ENCODE measurements at regions of chr19 and their contacts with region 1.

Region 1: DNA sequence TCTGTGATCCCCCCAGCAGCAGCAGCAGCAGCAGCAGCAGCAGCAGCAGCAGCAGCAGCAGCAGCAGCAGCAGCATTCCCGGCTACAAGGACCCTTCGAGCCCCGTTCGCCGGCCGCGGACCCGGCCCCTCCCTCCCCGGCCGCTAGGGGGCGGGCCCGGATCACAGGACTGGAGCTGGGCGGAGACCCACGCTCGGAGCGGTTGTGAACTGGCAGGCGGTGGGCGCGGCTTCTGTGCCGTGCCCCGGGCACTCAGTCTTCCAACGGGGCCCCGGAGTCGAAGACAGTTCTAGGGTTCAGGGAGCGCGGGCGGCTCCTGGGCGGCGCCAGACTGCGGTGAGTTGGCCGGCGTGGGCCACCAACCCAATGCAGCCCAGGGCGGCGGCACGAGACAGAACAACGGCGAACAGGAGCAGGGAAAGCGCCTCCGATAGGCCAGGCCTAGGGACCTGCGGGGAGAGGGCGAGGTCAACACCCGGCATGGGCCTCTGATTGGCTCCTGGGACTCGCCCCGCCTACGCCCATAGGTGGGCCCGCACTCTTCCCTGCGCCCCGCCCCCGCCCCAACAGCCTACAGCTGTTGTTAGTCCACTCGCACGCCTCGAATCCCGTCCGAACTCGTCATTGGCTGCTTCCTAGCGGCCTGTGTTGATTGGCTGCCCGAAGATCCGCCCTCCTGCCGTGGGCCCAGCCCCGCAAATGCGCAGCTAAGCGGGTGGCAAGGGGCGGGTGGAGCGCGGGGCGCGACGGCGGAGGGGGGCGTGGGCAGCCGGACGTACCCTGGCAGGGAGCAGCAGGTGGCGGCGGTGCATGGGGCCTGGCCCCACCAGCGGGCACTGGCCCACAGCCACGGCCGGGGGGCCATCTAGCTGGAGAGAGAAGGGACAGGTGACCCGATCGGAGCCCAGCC is 1.4 kb upstream of the SIX5 start:
- H3K4me3 ChIP-seq: peak overlapping the region; percentile 36
- H3K27ac ChIP-seq: peak overlapping the region; percentile 70
- H3K4me1 ChIP-seq: peaks cover 15% of the 10 kb centered on the region
- CTCF ChIP-seq: peak; percentile 97

Region 2: DNA sequence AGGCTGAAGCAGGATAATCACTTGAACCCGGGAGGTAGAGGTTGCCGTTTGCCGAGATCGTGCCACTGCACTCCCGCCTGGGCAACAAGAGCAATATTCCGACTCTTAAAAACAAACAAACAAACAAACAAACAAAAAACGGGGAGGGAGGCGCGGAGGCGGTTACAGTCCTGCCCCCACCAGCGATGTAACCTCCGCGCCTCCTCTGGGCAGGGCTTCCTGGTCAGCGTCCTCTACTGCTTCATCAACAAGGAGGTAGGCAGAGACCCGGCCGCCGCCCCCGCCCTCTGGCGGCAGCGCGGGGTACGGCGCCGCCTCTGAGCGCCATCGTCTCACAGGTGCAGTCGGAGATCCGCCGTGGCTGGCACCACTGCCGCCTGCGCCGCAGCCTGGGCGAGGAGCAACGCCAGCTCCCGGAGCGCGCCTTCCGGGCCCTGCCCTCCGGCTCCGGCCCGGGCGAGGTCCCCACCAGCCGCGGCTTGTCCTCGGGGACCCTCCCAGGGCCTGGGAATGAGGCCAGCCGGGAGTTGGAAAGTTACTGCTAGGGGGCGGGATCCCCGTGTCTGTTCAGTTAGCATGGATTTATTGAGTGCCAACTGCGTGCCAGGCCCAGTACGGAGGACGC is 88.9 kb before region 1 on chr19:
- CTCF ChIA-PET with region 1: interaction called, 9 read pairs
- POLR2A ChIA-PET with region 1: interaction called, 111 read pairs
- H3K4me3 ChIP-seq: peak overlapping the region; percentile 25
- H3K27ac ChIP-seq: no peak overlapping the region; the same call in 1 of the 2 replicates
- H3K4me1 ChIP-seq: peaks cover 11% of the 10 kb centered on the region
- CTCF ChIP-seq: peak; percentile 97

Region 3: GRCh38 chr19:45705115-45705514 is 65.3 kb before region 1 on chr19:
- CTCF ChIA-PET with region 1: no interaction called
- POLR2A ChIA-PET with region 1: interaction called, 26 read pairs
- H3K4me3 ChIP-seq: no peak overlapping the region
- H3K27ac ChIP-seq: no peak overlapping the region
- H3K4me1 ChIP-seq: no peaks in the 10 kb centered on the region
- CTCF ChIP-seq: no peak

Region 4: GRCh38 chr19:45717166-45717982 is 53.1 kb before region 1 on chr19:
- CTCF ChIA-PET with region 1: interaction called, 27 read pairs
- POLR2A ChIA-PET with region 1: interaction called, 133 read pairs
- H3K4me3 ChIP-seq: peak overlapping the region; percentile 72
- H3K27ac ChIP-seq: peak overlapping the region; percentile 92
- H3K4me1 ChIP-seq: peaks cover 19% of the 10 kb centered on the region
- CTCF ChIP-seq: peak; percentile 81

Region 5: DNA sequence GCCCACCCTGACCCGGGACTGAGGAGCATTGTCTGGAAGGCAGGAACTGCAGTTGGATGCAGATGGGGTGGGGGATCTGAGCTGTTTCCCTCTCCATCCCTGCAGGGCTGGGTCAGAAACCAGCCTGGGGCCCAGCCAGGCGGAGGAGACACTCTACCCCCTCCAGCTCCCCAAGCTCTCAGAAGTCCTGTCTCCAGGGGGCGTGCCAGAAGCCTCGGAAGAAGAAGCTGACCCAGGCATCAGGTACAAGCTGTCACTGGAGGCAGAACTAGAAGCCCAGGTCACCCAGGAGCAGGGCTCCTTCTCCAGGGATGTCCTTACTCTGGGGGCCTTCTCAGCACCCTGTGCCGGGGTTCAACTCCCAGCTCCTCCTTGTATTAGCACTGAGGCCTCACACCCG is 16.9 kb before region 1 on chr19:
- CTCF ChIA-PET with region 1: interaction called, 8 read pairs
- POLR2A ChIA-PET with region 1: interaction called, 10 read pairs
- H3K4me3 ChIP-seq: no peak overlapping the region
- H3K27ac ChIP-seq: no peak overlapping the region
- H3K4me1 ChIP-seq: 0 out of 2 replicates have a peak, but pooled peaks cover 2% of the 10 kb centered on the region
- CTCF ChIP-seq: 0 out of 2 replicates have a peak, but pooled peaks have one; percentile 7

Region 6: GRCh38 chr19:45798995-45799517 is 28.6 kb after region 1 on chr19:
- CTCF ChIA-PET with region 1: interaction called, 61 read pairs
- POLR2A ChIA-PET with region 1: interaction called, 37 read pairs
- H3K4me3 ChIP-seq: no peak overlapping the region
- H3K27ac ChIP-seq: no peak overlapping the region
- H3K4me1 ChIP-seq: peaks cover 2% of the 10 kb centered on the region; the same call in 1 of the 2 replicates
- CTCF ChIP-seq: peak; percentile 76

Region 7: DNA sequence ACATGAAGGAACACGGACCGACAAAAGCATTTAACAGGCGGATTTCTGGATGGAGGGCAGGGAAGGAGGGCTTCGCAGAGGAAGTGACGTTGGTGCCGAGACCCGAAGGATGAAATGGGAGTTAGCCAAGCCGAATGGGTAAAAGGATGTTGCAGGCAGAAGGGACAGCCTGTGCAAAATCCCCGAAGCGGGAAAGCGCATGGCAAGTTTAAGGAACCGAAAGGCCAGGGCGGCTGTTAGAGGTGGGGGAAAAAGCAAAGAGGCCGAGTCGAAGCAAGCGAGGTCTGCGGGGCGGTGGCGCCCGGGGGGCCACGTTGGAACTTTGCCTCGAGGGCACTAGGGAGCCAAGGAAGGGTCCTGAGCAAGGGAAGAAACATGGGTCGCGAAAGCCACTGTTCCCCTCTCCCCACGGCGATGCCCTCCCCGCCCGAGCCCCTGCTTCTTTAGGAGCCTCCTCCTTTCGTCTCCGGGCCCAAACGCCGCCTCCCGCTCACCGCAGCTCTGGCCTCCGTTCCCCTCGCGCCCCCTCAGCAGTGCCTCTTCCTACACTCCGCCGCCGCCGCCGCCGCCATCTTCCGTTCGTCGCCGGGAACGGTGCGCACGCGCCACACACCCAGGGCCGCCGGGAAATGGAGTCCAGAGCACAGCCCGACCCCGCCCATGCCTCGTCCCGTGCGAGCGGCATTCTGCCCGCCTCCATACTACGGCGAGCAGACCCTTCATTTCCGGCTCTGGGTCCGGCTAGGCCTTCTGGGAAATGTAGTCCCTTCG is 92.3 kb after region 1 on chr19 and contains the start of gene SYMPK:
- CTCF ChIA-PET with region 1: interaction called, 4 read pairs
- POLR2A ChIA-PET with region 1: interaction called, 19 read pairs
- H3K4me3 ChIP-seq: peak within 1 kb of the TSS; percentile 71
- H3K27ac ChIP-seq: peak within 1 kb of the TSS; percentile 83
- H3K4me1 ChIP-seq: peaks cover 10% of the 10 kb centered on the region
- CTCF ChIP-seq: no peak; the same call in 1 of the 2 replicates